Ovary (tissue), 10 donors: ENCODE measurements at regions of chr3 and their contacts with region 1.

Region 1: GRCh38 chr3:24004171-24004938 is 59.3 kb downstream of the NR1D2 start:
- DNase-seq: no peak
- H3K4me3 ChIP-seq: no peak overlapping the region
- H3K27ac ChIP-seq: no peak overlapping the region
- H3K4me1 ChIP-seq: no peaks in the 10 kb centered on the region
- H3K27me3 ChIP-seq: no peaks in the 10 kb centered on the region
- CTCF ChIP-seq: no peak
- EP300 ChIP-seq: no peak
- POLR2A ChIP-seq: no peak

Region 2: DNA sequence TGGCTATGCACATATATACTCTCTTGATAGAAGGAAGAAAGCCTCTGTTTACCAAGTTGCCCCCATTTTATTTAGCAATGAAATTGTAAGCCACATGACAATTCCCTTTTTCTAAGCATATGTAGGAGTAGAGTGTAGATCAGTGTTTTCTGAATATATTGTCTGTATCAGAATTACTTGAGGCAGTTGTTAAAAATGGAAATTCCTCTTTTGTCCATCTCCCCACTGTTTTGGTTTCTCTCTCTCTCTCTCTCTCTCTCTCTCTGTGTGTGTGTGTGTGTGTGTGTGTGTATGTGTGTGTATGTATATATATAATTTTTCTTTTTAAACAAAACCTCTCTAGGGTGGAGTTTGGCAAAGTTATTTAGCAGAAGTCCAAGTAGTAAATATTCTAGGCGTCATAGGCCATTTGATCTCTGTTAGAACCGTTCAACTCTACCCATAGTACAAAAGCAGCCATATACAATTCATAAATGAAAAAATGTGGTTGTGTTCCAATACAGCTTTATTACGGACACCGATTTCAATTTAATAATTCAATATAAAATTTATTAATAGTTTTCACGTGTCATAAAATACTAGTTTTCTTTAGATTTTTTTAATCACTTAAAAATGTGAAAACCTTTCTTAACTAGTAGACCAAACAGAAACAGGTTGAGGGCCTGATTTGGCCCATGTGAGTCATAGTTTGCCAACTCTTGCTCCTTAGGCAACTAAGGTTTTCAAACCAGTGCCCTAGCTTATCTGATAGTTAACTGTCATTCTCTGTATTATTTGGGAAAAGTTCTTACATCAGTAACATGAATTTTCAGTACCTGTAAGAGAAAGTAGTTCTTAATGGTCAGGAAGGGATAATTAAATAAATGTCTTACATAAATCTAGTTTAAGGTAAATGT is 158.8 kb before region 1 on chr3:
- intact Hi-C with region 1: no loop called
- DNase-seq: no peak
- H3K4me3 ChIP-seq: no peak overlapping the region
- H3K27ac ChIP-seq: no peak overlapping the region
- H3K4me1 ChIP-seq: peaks cover 1% of the 10 kb centered on the region
- H3K27me3 ChIP-seq: no peaks in the 10 kb centered on the region
- CTCF ChIP-seq: no peak
- EP300 ChIP-seq: no peak
- POLR2A ChIP-seq: no peak

Region 3: DNA sequence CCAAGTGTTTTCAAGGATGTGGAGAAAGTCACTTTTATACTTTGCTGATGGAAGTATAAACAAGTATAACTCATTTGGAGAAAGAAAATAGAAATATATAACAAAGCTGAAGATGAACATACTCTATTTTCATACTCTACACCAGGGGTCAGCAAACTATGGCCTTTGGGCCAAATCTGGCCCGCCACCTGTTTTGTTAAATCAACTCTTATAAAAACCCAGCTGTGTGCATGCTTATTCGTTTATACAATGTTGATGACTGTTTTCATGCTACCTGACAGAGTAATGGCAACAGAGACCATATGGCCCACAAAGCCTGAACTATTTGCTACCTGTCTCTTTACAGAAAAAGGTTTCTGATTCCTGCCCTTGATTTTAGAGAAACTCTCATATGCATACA is 64.7 kb after region 1 on chr3:
- intact Hi-C with region 1: loop called in 1 of 4 experiments (anchors 10 kb)
- DNase-seq: no peak
- H3K4me3 ChIP-seq: no peak overlapping the region
- H3K27ac ChIP-seq: no peak overlapping the region
- H3K4me1 ChIP-seq: no peaks in the 10 kb centered on the region
- H3K27me3 ChIP-seq: no peaks in the 10 kb centered on the region
- CTCF ChIP-seq: no peak
- EP300 ChIP-seq: no peak
- POLR2A ChIP-seq: no peak

Region 4: GRCh38 chr3:24680214-24680967 is 676.0 kb after region 1 on chr3:
- intact Hi-C with region 1: loop called (anchors 5 to 10 kb)
- DNase-seq: peak; percentile 17 to 71 (median 67)
- H3K4me3 ChIP-seq: no peak overlapping the region
- H3K27ac ChIP-seq: no peak overlapping the region
- H3K4me1 ChIP-seq: no peaks in the 10 kb centered on the region
- H3K27me3 ChIP-seq: no peaks in the 10 kb centered on the region
- CTCF ChIP-seq: peak; percentile 37 to 71 (median 41)
- EP300 ChIP-seq: no peak
- POLR2A ChIP-seq: no peak